ENCODE measurements at regions of chr19 and their contacts with region 1.

Region 1: DNA sequence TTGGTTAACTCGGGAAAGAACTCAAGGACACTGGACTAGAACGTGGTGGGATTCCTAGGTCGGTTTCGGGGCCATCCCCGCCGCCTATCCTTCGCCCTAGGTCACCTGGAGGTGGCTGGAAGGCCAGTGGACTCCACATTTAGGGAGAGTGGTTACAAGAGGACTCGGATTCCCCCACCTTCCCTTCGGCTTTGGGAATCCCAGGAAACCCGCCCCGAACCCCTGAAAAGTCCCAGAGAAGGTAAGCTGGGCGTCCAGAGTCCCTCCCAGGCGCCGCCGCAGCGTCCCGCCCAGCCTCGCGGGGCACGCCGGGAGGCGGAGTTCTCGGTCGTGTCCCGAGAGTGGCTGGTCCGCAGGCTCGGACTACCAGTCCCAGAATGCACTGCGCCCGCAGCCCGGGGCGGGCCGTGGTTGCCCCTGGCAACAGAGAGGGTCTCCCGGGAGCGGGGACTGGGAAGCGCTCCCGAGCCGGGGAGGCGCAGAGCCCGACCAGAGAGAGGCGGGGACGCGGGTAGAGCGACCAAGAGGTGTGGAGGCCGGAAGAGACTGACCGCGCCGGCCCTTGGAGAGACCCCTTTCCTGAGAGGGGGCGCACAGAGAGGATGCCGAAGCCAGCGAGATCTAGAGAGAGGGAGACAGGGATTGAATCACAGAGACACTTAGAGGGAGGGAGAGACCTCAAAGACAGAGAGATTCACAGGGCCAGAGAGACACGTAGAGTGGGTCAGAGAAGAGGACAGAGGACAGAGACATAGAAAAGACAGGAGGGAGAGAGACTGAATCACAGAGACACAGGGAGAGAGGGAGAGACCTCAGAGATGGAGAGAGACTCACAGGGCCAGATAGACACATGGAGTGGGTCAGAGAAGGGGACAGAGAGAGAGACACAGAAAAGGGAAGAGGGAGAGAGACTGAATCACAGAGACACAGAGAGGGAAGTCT is 2.6 kb upstream of the PRKCG start:
- DNase-seq: peak; percentile 92 to 97 (median 95)
- H3K4me3 ChIP-seq: peak overlapping the region; percentile 40
- H3K27ac ChIP-seq: no peak overlapping the region
- H3K4me1 ChIP-seq: peaks cover 7% of the 10 kb centered on the region
- H3K27me3 ChIP-seq: no peaks in the 10 kb centered on the region
- CTCF ChIP-seq: no peak
- EP300 ChIP-seq: no peak
- POLR2A ChIP-seq: no peak

Region 2: GRCh38 chr19:53906211-53907192 is 27.1 kb after region 1 on chr19:
- intact Hi-C with region 1: no loop called
- DNase-seq: peak in 2 of 5 donors; percentile 31 to 53
- H3K4me3 ChIP-seq: no peak overlapping the region
- H3K27ac ChIP-seq: no peak overlapping the region
- H3K4me1 ChIP-seq: peaks cover 2% of the 10 kb centered on the region
- H3K27me3 ChIP-seq: peaks cover 3% of the 10 kb centered on the region
- CTCF ChIP-seq: peak in 2 of 3 donors; percentile 17 to 26
- EP300 ChIP-seq: no peak
- POLR2A ChIP-seq: no peak

Region 3: DNA sequence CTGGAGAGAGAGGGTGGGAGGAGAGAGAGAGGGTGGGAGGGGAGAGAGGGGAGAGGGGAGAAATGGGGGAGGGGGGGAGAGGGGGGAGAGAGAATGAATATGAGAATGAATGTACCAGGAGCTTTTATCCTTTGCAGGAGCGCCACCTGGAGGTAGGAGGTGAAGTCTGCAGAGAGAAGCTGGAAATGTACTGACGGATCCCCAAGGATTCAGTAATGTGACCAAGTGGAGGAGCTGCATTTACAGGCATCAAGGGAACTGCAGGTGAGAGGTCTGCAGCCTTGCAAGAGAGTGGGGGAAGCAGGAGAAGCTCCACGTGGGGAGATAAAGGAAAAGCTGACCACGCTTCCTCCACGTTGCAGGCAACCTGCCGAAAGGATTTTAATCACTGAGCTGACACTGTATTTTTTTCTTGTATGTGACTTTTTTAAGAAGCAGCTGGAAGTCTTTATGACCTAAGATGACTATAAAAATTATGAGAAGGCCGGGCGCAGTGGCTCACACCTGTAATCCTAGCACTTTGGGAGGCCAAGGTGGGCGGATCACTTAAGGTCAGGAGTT is 150.6 kb after region 1 on chr19:
- intact Hi-C with region 1: no loop called
- DNase-seq: peak in 4 of 5 donors; percentile 19 to 45 (median 24)
- H3K4me3 ChIP-seq: no peak overlapping the region
- H3K27ac ChIP-seq: no peak overlapping the region
- H3K4me1 ChIP-seq: no peaks in the 10 kb centered on the region
- H3K27me3 ChIP-seq: no peaks in the 10 kb centered on the region
- CTCF ChIP-seq: no peak
- EP300 ChIP-seq: no peak
- POLR2A ChIP-seq: no peak

Region 4: DNA sequence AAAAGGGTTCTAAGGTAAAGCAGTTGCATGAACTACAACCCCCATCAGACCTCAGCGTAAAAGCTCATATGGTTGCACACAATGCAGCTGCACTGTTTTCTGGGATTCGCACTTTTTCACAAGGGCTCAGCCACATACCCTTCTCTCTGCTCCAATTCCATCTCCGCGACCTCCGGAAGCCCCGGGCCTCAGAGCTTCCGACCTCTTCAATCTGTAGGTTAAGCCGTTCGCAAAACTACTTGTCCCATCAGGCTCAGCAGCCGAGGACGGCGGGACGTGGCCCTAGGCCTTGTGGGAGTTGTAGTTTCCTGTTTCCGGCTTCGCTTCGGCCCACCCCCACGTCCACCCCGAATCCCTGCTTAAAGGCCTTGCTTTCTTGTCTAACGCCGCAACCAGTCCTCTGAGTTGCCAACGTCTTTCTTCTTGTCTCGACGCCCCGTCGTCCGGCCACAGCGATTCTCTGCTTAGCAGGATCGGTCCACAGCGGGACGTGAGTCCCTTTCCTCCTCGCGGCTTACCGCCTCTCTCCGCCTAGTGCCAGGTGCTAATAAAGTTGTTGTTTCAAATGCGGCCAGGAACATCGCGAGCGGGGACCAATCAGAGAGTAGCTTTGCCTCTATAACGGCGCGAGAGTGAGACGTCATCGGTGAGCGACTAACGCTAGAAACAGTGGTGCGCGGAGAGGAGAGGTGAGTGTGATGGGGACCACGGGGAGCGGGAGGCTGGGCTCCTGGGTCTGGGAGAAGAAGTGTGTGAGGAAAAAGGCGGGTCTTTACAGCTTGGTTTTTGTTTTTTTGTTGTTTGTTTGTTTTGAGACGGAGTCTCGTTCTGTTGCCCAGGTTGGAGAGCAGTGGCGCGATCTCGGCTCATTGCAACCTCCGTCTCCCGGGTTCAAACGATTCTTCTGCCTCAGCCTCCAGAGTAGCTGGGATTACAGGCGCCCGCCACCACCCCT is 236.0 kb after region 1 on chr19 and contains the starts of genes PRPF31 and TFPT:
- intact Hi-C with region 1: loop called in 1 of 4 experiments (anchors 10 kb)
- DNase-seq: peak; percentile 95 to 98 (median 96)
- H3K4me3 ChIP-seq: peak within 1 kb of the TSS; percentile 72
- H3K27ac ChIP-seq: peak within 1 kb of the TSS; percentile 69 to 81
- H3K4me1 ChIP-seq: peaks cover 10% of the 10 kb centered on the region
- H3K27me3 ChIP-seq: no peaks in the 10 kb centered on the region
- CTCF ChIP-seq: peak in 2 of 3 donors; percentile 25 to 31
- EP300 ChIP-seq: no peak
- POLR2A ChIP-seq: peak; percentile 78
- total RNA-seq, gene PRPF31: 30.0 to 59.5 (median 48.8) TPM
- total RNA-seq, gene TFPT: 7.6 to 18.3 (median 12.8) TPM

Measured in ovary (tissue), 10 donors.